ENCODE measurements at regions of chr2 and their contacts with region 1.

Region 1: GRCh38 chr2:240143801-240144648 is 3.6 kb upstream of the OTOS start:
- DNase-seq: peak; percentile 63 to 89 (median 77)
- ATAC-seq: peak; percentile 92
- H3K4me3 ChIP-seq: no peak overlapping the region
- H3K4me3 Mint-ChIP-seq: peak overlapping the region in 1 of 10 donors; percentile 47
- H3K27ac ChIP-seq: no peak overlapping the region
- H3K27ac Mint-ChIP-seq: no peak overlapping the region
- H3K4me1 ChIP-seq: peaks cover 0 to 3% of the 10 kb centered on the region in 2 donors
- H3K4me1 Mint-ChIP-seq: peaks cover 0 to 2% (median 0%) of the 10 kb centered on the region in 7 donors
- H3K27me3 ChIP-seq: no peaks in the 10 kb centered on the region
- H3K27me3 Mint-ChIP-seq: peaks cover 0 to 8% (median 3%) of the 10 kb centered on the region in 5 donors

Region 2: DNA sequence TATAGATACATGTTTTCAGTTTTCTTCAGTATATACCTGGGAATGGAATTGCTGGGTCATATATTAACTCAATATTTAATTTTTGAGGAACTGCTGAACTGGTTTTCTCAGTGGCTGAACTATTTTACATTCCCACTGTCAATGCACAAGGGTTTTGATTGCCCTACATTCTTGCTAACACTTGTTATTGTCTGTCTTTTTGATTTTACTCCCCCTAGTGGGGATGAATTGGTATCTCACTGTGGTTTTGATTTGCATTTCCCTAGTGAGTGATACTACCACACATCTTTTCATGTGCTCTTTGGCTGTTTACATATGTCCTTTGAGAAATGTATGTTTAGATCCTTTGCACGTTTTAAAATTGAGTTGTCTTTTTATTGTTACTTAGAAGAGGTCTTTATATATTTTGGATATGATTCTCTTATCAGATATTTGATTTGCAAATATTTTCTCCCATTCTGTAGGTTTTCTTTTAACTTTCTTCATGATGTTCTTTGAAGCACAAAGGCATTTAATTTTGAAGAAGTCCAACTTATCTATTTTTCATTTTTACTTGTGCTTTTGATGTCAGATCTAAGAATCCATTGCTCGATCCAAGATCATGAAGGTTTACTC is 1681.1 kb before region 1 on chr2:
- CTCF ChIA-PET with region 1: no interaction called
- POLR2A ChIA-PET with region 1: no interaction called
- intact Hi-C with region 1: loop called in 1 of 2 experiments (anchors 10 kb)
- DNase-seq: peak in 6 of 9 donors; percentile 16 to 67 (median 58)
- ATAC-seq: peak; percentile 76
- H3K4me3 ChIP-seq: no peak overlapping the region
- H3K4me3 Mint-ChIP-seq: no peak overlapping the region
- H3K27ac ChIP-seq: no peak overlapping the region
- H3K27ac Mint-ChIP-seq: no peak overlapping the region
- H3K4me1 ChIP-seq: no peaks in the 10 kb centered on the region
- H3K4me1 Mint-ChIP-seq: peaks cover 0 to 6% (median 0%) of the 10 kb centered on the region in 7 donors
- H3K27me3 ChIP-seq: no peaks in the 10 kb centered on the region
- H3K27me3 Mint-ChIP-seq: peaks cover 0 to 10% (median 0%) of the 10 kb centered on the region in 5 donors

Region 3: DNA sequence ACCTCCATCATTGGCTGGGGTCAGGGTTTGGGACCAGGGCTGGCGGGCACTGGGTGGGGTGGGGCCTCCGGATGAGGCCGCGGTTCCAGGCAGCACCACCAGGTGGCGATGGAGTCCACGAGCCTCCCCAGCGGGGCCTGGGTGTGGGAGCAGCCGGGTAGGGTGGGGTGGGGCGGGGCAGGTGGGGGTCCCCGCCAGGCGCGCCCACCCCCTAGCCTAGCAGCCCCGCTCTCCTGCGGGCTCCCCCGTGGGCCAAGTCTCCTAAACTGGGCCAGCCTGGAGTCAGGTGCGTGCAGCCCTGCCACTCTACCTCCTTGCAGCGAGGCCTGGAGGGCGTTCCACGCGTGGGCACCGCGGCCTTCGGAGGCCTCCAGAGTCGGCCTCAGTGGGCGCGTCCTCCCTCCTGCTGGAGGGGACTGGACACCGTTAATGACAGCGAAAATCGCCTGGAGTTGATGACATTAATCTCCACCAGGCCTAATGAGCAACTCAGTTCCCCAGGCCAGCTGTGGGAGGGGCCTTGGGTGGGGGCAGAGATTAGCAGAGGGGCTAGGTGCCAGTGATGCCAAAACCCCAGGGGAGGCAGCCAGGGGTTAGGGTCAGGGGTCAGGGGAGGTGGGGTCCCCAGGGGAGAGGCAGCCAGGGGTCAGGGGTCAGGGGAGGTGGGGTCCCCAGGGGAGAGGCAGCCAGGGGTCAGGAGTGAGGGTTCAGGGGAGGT is 1108.5 kb before region 1 on chr2:
- CTCF ChIA-PET with region 1: no interaction called
- POLR2A ChIA-PET with region 1: interaction called, 3 read pairs
- intact Hi-C with region 1: loop called in 1 of 2 experiments (anchors 5 kb)
- DNase-seq: peak; percentile 30 to 79 (median 62)
- ATAC-seq: peak; percentile 85
- H3K4me3 ChIP-seq: no peak overlapping the region
- H3K4me3 Mint-ChIP-seq: no peak overlapping the region
- H3K27ac ChIP-seq: no peak overlapping the region
- H3K27ac Mint-ChIP-seq: no peak overlapping the region
- H3K4me1 ChIP-seq: no peaks in the 10 kb centered on the region
- H3K4me1 Mint-ChIP-seq: peaks cover 0 to 2% (median 0%) of the 10 kb centered on the region in 7 donors
- H3K27me3 ChIP-seq: no peaks in the 10 kb centered on the region
- H3K27me3 Mint-ChIP-seq: peaks cover 7 to 27% (median 18%) of the 10 kb centered on the region in 5 donors

Region 4: GRCh38 chr2:240060977-240061591 is 82.9 kb before region 1 on chr2:
- CTCF ChIA-PET with region 1: interaction called, 81 read pairs
- POLR2A ChIA-PET with region 1: interaction called, 4 read pairs
- intact Hi-C with region 1: loop called (anchors 1 kb)
- DNase-seq: peak in 7 of 9 donors; percentile 29 to 62 (median 48)
- ATAC-seq: peak; percentile 78
- H3K4me3 ChIP-seq: no peak overlapping the region
- H3K4me3 Mint-ChIP-seq: no peak overlapping the region
- H3K27ac ChIP-seq: no peak overlapping the region
- H3K27ac Mint-ChIP-seq: no peak overlapping the region
- H3K4me1 ChIP-seq: no peaks in the 10 kb centered on the region
- H3K4me1 Mint-ChIP-seq: no peaks in the 10 kb centered on the region
- H3K27me3 ChIP-seq: no peaks in the 10 kb centered on the region
- H3K27me3 Mint-ChIP-seq: peaks cover 14 to 38% (median 27%) of the 10 kb centered on the region in 5 donors

Region 5: DNA sequence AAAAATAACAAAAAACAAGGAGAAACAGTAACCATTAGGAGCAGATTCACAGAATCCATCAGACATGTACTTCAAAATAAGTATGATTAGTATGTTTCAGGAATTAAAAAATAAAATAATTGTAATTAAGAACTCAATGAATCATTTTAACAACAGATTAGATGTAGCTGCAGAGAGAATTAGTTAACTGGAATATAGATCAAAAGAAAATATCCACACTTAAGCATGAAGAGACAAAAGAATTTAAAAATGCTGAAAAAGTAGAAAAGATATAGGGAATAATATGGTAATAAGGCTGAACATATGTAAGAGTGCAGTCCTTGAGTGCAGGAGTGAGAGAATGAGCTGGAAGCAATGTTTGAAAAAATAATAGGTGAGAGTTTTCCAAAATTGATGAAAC is 66.6 kb before region 1 on chr2:
- CTCF ChIA-PET with region 1: no interaction called
- POLR2A ChIA-PET with region 1: no interaction called
- intact Hi-C with region 1: no loop called
- DNase-seq: no peak
- ATAC-seq: no peak
- H3K4me3 ChIP-seq: no peak overlapping the region
- H3K4me3 Mint-ChIP-seq: no peak overlapping the region
- H3K27ac ChIP-seq: no peak overlapping the region
- H3K27ac Mint-ChIP-seq: no peak overlapping the region
- H3K4me1 ChIP-seq: no peaks in the 10 kb centered on the region
- H3K4me1 Mint-ChIP-seq: no peaks in the 10 kb centered on the region
- H3K27me3 ChIP-seq: no peaks in the 10 kb centered on the region
- H3K27me3 Mint-ChIP-seq: peaks cover 12 to 53% (median 42%) of the 10 kb centered on the region in 5 donors